CD8-positive, alpha-beta memory T cell (primary cell): ENCODE measurements at regions of chr17 and their contacts with region 1.

Region 1: GRCh38 chr17:58631523-58632323 is 60.1 kb downstream of the TEX14 start:
- DNase-seq: peak; percentile 85 to 95 (median 93)
- H3K4me3 ChIP-seq: peak overlapping the region; percentile 47
- H3K4me3 Mint-ChIP-seq: no peak overlapping the region
- H3K27ac ChIP-seq: peak overlapping the region; percentile 92
- H3K27ac Mint-ChIP-seq: no peak overlapping the region
- H3K4me1 ChIP-seq: peaks cover 15% of the 10 kb centered on the region
- H3K4me1 Mint-ChIP-seq: peaks cover 0 to 8% (median 0%) of the 10 kb centered on the region in 3 donors
- H3K27me3 ChIP-seq: no peaks in the 10 kb centered on the region
- H3K27me3 Mint-ChIP-seq: peaks cover 0 to 3% of the 10 kb centered on the region in 2 donors

Region 2: GRCh38 chr17:57975044-57975443 is 656.7 kb before region 1 on chr17:
- CTCF ChIA-PET with region 1: no interaction called
- POLR2A ChIA-PET with region 1: interaction called, 11 read pairs
- DNase-seq: no peak
- H3K4me3 ChIP-seq: no peak overlapping the region
- H3K4me3 Mint-ChIP-seq: no peak overlapping the region
- H3K27ac ChIP-seq: no peak overlapping the region
- H3K27ac Mint-ChIP-seq: peak overlapping the region in 1 of 8 donors; percentile 38
- H3K4me1 ChIP-seq: no peaks in the 10 kb centered on the region
- H3K4me1 Mint-ChIP-seq: peaks cover 10 to 20% (median 19%) of the 10 kb centered on the region in 3 donors
- H3K27me3 ChIP-seq: no peaks in the 10 kb centered on the region
- H3K27me3 Mint-ChIP-seq: no peaks in the 10 kb centered on the region

Region 3: DNA sequence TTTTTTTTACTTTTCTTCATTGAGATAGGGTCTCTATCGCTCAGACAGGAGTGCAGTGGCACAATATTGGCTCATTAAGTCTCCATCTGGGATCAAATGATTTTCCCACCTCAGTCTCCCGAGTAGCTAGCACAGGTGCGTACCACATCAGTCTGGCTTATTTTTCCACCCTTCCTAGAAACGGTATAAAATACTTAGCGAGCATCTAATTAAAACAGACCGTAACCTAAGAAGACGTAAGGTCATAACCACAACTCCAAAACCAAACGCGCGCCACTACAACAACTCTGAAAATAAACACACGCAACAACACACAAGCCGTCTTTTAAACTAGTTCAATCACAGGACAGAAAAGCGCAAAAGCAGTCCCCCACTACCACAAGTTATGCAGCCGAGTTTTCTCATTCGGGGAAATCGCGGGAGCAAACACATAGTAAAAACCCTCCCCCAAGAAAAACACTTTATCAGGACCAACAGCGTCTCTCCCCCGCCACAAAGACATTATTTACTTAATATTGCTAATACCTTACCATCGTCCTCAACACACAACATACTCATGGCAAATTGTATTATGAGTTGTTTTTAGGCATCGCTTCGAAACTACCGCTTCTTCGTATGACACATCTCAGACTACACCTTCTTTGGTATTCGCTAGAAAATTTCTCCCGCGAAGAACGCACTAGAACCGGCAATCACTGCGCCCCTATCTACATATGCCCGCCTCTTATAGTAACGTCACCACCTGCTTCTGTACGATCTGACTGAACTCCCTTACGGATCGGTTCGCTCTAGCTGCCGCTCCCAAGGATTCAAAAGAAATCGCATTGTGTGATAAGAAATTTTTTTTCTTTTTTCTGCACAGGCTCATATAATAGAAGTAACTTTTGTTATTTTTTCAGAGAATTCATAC is 27.3 kb after region 1 on chr17:
- CTCF ChIA-PET with region 1: interaction called, 3 read pairs
- POLR2A ChIA-PET with region 1: interaction called, 12 read pairs
- DNase-seq: peak; percentile 52 to 88 (median 85)
- H3K4me3 ChIP-seq: peak overlapping the region; percentile 63
- H3K4me3 Mint-ChIP-seq: peak overlapping the region; percentile 81 to 91 (median 86)
- H3K27ac ChIP-seq: peak overlapping the region; percentile 98
- H3K27ac Mint-ChIP-seq: peak overlapping the region; percentile 92 to 100 (median 100)
- H3K4me1 ChIP-seq: peaks cover 3% of the 10 kb centered on the region
- H3K4me1 Mint-ChIP-seq: peaks cover 16 to 23% (median 23%) of the 10 kb centered on the region in 3 donors
- H3K27me3 ChIP-seq: no peaks in the 10 kb centered on the region
- H3K27me3 Mint-ChIP-seq: peaks cover 0 to 7% of the 10 kb centered on the region in 2 donors

Region 4: GRCh38 chr17:58669853-58670252 is 38.1 kb after region 1 on chr17:
- CTCF ChIA-PET with region 1: no interaction called
- POLR2A ChIA-PET with region 1: no interaction called
- DNase-seq: no peak
- H3K4me3 ChIP-seq: no peak overlapping the region
- H3K4me3 Mint-ChIP-seq: no peak overlapping the region
- H3K27ac ChIP-seq: no peak overlapping the region
- H3K27ac Mint-ChIP-seq: peak overlapping the region in 2 of 8 donors; percentile 6 to 66
- H3K4me1 ChIP-seq: no peaks in the 10 kb centered on the region
- H3K4me1 Mint-ChIP-seq: peaks cover 3 to 8% (median 7%) of the 10 kb centered on the region in 3 donors
- H3K27me3 ChIP-seq: no peaks in the 10 kb centered on the region
- H3K27me3 Mint-ChIP-seq: peaks cover 9 to 15% of the 10 kb centered on the region in 2 donors

Region 5: DNA sequence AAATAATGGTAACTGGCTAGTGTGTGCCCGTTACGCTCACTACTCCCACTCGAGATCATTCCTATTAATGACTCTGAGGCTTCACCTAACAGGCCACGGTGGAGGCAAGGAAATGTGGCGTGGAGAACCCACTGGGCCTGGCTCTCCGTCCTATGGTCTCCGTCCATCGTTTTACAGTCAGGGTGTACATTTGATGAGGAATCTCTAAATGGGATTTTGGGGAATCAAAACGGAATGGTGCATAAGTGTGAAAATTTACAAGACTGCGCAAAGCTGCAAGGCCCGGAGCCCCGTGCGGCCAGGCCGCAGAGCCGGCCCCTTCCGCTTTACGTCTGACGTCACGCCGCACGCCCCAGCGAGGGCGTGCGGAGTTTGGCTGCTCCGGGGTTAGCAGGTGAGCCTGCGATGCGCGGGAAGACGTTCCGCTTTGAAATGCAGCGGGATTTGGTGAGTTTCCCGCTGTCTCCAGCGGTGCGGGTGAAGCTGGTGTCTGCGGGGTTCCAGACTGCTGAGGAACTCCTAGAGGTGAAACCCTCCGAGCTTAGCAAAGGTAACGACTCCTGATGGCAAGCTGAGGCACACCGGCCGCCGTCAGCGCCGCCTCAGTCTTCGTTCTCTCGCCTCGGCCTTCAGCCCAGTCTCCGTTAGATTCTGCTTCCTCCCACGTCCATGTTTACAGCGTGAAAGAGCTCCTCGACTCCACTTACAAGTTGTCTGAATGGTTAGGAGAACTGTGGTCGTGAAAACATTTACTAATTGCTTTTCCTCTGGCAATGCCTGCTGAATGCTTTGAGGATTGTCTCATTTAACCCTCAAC is 60.7 kb after region 1 on chr17 and contains the start of gene RAD51C:
- CTCF ChIA-PET with region 1: no interaction called
- POLR2A ChIA-PET with region 1: interaction called, 12 read pairs
- DNase-seq: peak; percentile 71 to 88 (median 78)
- H3K4me3 ChIP-seq: peak within 1 kb of the TSS; percentile 88
- H3K4me3 Mint-ChIP-seq: peak within 1 kb of the TSS; percentile 88 to 97 (median 94)
- H3K27ac ChIP-seq: peak within 1 kb of the TSS; percentile 81
- H3K27ac Mint-ChIP-seq: peak within 1 kb of the TSS; percentile 83 to 98 (median 92)
- H3K4me1 ChIP-seq: peaks cover 16% of the 10 kb centered on the region
- H3K4me1 Mint-ChIP-seq: peaks cover 25 to 37% (median 25%) of the 10 kb centered on the region in 3 donors
- H3K27me3 ChIP-seq: no peaks in the 10 kb centered on the region
- H3K27me3 Mint-ChIP-seq: no peaks in the 10 kb centered on the region
- total RNA-seq, gene RAD51C: 88.9 to 95.3 TPM